ENCODE measurements at regions of chr15 and their contacts with region 1.

Region 1: DNA sequence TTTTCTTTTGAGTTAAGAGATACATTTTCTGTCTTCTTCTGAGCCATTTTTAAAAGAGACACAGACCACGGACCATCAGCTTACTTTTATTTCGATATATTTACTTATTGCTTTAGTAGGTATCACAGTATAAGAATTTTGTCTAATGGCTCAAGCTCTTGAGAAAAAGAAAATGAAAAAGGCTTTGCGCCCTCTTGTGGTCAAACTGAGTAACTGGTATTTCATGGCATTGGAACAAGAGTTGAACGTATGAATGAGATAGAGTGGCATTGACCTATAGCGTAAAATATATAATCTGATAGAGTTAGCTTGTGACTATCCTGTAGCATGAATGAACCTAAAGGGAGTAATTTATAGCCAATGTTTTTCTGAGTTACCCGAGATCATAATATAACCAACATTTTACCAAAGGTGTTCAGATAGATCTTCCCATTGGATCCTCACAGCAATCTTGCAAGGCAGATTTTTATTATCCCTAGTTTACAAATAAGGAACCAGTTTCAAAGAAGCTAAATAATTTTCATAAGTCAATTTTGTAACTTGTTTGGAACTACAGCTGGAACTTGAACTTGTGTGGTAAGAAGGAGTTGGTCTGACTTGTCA is 154.6 kb downstream of the POLR2M start:
- DNase-seq: peak; percentile 40
- ATAC-seq: no peak
- H3K4me3 Mint-ChIP-seq: no peak overlapping the region
- H3K27ac Mint-ChIP-seq: no peak overlapping the region
- H3K4me1 Mint-ChIP-seq: peaks cover 3% of the 10 kb centered on the region
- H3K27me3 Mint-ChIP-seq: peaks cover 8% of the 10 kb centered on the region

Region 2: GRCh38 chr15:57340682-57341259 is 520.4 kb before region 1 on chr15:
- CTCF ChIA-PET with region 1: no interaction called
- POLR2A ChIA-PET with region 1: no interaction called
- intact Hi-C with region 1: loop called in 1 of 2 experiments (anchors 5 kb)
- DNase-seq: peak; percentile 64
- ATAC-seq: peak; percentile 55
- H3K4me3 Mint-ChIP-seq: no peak overlapping the region
- H3K27ac Mint-ChIP-seq: no peak overlapping the region
- H3K4me1 Mint-ChIP-seq: no peaks in the 10 kb centered on the region
- H3K27me3 Mint-ChIP-seq: no peaks in the 10 kb centered on the region

Region 3: DNA sequence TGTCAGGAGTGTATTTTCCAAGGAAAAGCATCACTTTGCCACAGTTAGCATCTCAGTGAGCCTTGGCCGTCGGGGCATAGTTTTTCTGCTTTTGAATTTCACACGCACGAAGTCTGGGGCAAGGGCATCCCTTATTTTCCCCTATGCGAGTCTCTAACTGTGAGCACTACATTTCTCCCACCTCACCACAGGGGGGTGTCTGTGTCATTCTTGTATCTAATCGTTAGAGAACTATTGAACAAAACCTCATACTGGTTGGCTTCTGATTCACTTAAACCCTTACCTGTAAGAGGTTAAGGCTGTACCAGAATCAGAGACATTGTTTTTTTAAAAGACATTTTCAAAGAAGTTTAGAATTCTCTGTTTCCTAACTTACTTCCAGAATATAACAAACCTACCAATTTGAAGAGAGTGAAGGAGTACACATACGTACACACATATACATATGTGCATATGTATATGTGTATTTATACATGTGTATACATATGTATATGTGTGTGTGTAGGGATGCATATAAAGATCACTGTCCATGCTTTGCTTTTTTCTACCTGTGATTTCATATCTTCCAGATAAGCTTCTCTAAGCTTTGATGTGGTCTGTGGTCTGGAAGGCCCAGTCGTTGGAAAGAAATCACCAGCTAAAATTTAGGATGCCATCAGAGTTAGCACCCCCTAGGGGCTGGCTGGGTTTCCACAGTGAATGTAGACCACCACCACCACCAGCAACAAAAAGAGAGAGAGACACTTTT is 220.0 kb before region 1 on chr15:
- CTCF ChIA-PET with region 1: interaction called, 12 read pairs
- POLR2A ChIA-PET with region 1: no interaction called
- intact Hi-C with region 1: loop called (anchors 1 to 5 kb)
- DNase-seq: peak; percentile 38
- ATAC-seq: peak; percentile 49
- H3K4me3 Mint-ChIP-seq: no peak overlapping the region
- H3K27ac Mint-ChIP-seq: no peak overlapping the region
- H3K4me1 Mint-ChIP-seq: no peaks in the 10 kb centered on the region
- H3K27me3 Mint-ChIP-seq: peaks cover 2% of the 10 kb centered on the region

Region 4: DNA sequence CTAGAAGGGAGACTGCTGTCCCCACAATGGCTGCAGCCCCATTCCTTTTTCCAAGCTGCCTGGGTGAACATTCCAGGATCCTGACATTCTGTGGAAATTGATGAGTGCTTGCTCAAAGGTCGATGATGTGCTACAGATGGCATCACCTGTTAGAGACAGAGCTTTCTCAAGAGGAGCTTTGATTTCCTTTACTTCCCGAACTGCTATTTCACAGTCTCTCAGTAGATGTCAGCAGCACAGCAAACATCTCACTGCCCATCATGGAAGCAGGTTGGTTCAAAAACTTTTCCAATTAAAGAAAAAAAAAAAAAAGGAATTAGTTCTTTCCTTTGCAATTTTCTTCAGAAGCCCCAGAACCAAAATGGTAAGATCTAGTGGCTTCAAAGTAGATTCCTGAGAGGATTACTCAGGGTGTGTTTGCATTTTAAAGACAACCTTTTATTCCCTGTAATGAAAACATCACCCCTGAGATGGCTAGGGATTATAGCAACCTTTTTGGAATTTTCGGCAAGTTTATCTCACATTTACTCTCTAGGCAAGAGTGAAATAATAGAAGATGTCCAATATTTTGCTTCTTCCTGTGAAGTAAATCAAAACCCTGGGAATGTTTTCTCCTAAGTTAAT is 109.8 kb before region 1 on chr15:
- CTCF ChIA-PET with region 1: interaction called, 77 read pairs
- POLR2A ChIA-PET with region 1: no interaction called
- intact Hi-C with region 1: loop called (anchors 1 to 2 kb)
- DNase-seq: no peak
- ATAC-seq: no peak
- H3K4me3 Mint-ChIP-seq: no peak overlapping the region
- H3K27ac Mint-ChIP-seq: no peak overlapping the region
- H3K4me1 Mint-ChIP-seq: no peaks in the 10 kb centered on the region
- H3K27me3 Mint-ChIP-seq: no peaks in the 10 kb centered on the region

Region 5: DNA sequence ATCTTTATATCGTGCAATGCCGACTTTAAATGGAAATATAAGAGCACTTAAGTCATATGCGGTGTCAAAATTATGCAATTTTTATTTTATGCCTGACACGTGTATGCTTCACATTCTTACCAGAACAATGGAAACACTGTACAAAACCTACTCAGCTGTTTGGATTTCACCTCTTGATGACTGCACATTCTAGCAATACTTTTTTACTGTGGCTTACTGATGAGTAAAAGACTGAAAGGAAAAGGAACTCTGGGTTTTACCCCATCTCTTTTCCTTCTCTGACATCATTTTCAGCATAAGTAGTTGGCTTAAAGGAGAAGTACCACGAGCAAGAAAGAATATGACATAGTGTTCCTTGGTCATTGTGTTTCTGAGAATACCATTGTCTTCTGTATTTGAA is 11.8 kb before region 1 on chr15:
- CTCF ChIA-PET with region 1: interaction called, 24 read pairs
- POLR2A ChIA-PET with region 1: no interaction called
- intact Hi-C with region 1: no loop called
- DNase-seq: no peak
- ATAC-seq: peak; percentile 78
- H3K4me3 Mint-ChIP-seq: no peak overlapping the region
- H3K27ac Mint-ChIP-seq: no peak overlapping the region
- H3K4me1 Mint-ChIP-seq: peaks cover 8% of the 10 kb centered on the region
- H3K27me3 Mint-ChIP-seq: peaks cover 16% of the 10 kb centered on the region

Measured in activated CD4-positive, alpha-beta T cell treated with anti-CD3 and anti-CD28 coated beads for 36 hours (primary cell).